ENCODE measurements at regions of chr10 and their contacts with region 1.

Region 1: GRCh38 chr10:51141010-51141409 is 66.7 kb downstream of the PRKG1 start:
- DNase-seq: no peak

Region 2: DNA sequence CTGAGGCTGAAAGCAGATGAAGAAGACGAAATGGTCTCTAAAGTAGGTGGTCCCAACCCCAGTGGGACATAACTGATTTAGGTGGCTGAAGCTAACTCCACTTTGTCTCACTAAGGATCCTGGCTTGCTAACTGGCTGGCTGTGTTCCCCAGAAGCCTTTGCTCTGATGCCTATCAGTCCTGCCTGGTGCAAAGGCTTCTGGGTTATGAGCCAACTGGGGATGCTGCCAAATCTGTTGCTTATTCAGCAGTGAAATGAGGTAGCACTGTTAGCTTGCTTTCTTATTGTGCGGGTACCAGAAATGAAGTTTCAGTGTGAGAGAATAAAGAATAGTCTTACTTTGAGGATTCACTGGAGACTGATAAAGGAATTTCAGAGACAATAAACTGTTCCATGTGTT is 48.6 kb before region 1 on chr10:
- intact Hi-C with region 1: loop called (anchors 10 kb)
- DNase-seq: peak; percentile 86

Region 3: GRCh38 chr10:51186361-51186760 is 45.4 kb after region 1 on chr10:
- intact Hi-C with region 1: no loop called
- DNase-seq: no peak

Region 4: DNA sequence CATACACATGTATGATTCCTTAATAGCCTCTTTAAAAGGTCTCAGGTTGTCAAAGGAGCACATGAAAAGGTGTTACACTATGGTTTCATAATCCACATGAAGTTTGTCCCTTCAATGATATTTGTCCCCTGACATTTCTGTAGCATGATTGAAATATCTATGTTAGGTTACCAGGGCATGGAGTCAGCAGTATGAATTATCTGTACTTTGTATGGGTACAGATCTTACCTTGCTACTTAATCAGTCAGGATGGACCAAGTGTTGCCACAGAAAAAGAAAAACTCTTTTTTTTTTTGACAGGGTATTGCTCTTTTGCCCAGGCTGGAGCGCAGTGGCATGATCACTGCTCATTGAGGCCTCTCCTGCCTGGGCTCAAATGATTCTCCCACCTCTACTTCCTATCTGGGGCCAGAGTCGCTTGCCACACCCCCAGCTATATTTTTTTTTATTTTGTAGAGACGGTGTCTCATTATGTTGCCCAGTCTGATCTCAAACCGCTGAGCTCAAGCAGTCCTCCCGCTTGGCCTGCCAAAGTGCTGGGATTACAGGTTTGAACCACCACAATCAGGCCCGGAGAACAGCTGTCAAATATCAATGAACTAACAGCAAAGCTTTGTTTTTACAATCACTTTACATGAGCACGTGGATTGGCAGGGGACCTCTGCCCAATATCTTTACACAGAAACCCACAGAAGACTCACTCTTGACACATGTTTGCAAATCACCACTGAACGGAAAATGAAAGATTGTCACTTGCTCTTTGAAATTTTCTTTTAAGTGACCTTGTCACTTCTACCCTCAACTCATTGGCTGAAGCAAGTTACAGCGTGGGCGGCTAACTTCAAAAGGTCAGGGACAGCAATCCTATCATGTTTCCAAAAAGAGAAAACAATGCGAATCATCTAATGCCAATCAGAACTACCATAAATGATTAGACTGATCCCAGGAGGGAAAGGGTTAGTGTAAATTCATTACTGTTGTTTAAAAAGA is 73.5 kb after region 1 on chr10:
- intact Hi-C with region 1: no loop called
- DNase-seq: no peak